ENCODE measurements at regions of chr3 and their contacts with region 1.

Region 1: GRCh38 chr3:160399125-160400029 is at the starts of genes IFT80 and SMC4:
- DNase-seq: peak; percentile 88 to 97 (median 95)
- ATAC-seq: peak; percentile 95 to 98 (median 96)
- H3K4me3 ChIP-seq: peak within 1 kb of the TSS; percentile 65 to 100
- H3K4me3 Mint-ChIP-seq: peak within 1 kb of the TSS; percentile 91 to 97 (median 97)
- H3K27ac ChIP-seq: peak within 1 kb of the TSS; percentile 82
- H3K27ac Mint-ChIP-seq: peak within 1 kb of the TSS; percentile 99
- H3K4me1 ChIP-seq: peaks cover 13 to 23% of the 10 kb centered on the region in 2 experiments
- H3K4me1 Mint-ChIP-seq: peaks cover 49 to 59% (median 54%) of the 10 kb centered on the region in 3 donors
- H3K27me3 ChIP-seq: peaks cover 0 to 9% of the 10 kb centered on the region in 2 experiments
- H3K27me3 Mint-ChIP-seq: peaks cover 3 to 11% of the 10 kb centered on the region in 2 donors
- total RNA-seq, gene IFT80: 22.5 to 34.2 (median 26.4) TPM
- total RNA-seq, gene SMC4: 41.9 to 63.1 (median 51.2) TPM

Region 2: GRCh38 chr3:158683216-158683962 is 1716.0 kb before region 1 on chr3:
- CTCF ChIA-PET with region 1: interaction called in 1 of 2 experiments, 11 read pairs
- POLR2A ChIA-PET with region 1: no interaction called
- DNase-seq: no peak
- ATAC-seq: no peak
- H3K4me3 ChIP-seq: no peak overlapping the region
- H3K4me3 Mint-ChIP-seq: no peak overlapping the region
- H3K27ac ChIP-seq: no peak overlapping the region
- H3K27ac Mint-ChIP-seq: no peak overlapping the region
- H3K4me1 ChIP-seq: no peaks in the 10 kb centered on the region
- H3K4me1 Mint-ChIP-seq: no peaks in the 10 kb centered on the region
- H3K27me3 ChIP-seq: no peaks in the 10 kb centered on the region
- H3K27me3 Mint-ChIP-seq: no peaks in the 10 kb centered on the region

Region 3: DNA sequence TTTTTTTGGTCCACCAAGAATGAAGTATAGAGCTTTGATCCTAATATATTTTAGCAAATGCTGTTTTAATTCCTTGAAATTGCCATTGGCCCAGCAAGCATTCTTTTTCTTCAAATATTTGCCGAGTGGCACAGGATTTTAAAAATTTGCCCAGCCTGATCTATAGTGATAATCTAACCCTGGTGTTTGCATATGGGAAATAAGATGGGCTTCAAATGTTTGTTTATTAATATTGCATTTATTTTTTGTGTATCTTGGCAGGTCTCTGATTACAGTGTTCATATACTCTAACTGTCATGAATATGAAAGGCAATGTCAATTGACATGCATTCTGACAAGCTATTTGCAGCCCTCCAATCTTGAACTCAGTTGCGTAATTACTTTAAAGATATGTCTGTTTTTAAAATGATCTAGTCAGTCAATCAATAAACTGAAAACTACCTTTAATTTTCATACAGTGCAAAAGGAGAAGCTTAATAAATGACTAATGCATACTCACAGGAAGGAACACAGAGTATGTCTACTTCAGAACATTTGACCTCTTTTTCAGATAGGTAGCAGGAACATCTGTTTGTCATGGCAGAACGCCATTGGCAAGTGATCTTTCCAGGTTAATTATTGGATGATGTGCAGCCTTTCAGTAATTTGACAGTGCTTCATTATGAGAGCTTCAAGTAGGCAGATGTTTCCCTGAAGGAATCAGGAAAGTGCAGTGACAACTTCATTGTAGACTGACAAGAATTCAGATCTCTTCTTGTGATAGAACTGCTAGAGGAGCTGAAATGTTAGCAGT is 1422.0 kb after region 1 on chr3:
- CTCF ChIA-PET with region 1: no interaction called
- POLR2A ChIA-PET with region 1: no interaction called
- DNase-seq: no peak
- ATAC-seq: no peak
- H3K4me3 ChIP-seq: no peak overlapping the region
- H3K4me3 Mint-ChIP-seq: no peak overlapping the region
- H3K27ac ChIP-seq: no peak overlapping the region
- H3K27ac Mint-ChIP-seq: no peak overlapping the region
- H3K4me1 ChIP-seq: no peaks in the 10 kb centered on the region
- H3K4me1 Mint-ChIP-seq: no peaks in the 10 kb centered on the region
- H3K27me3 ChIP-seq: no peaks in the 10 kb centered on the region
- H3K27me3 Mint-ChIP-seq: no peaks in the 10 kb centered on the region

Measured in T-cell (primary cell).